H1 (cell line): ENCODE measurements at regions of chr10 and their contacts with region 1.

Region 1: DNA sequence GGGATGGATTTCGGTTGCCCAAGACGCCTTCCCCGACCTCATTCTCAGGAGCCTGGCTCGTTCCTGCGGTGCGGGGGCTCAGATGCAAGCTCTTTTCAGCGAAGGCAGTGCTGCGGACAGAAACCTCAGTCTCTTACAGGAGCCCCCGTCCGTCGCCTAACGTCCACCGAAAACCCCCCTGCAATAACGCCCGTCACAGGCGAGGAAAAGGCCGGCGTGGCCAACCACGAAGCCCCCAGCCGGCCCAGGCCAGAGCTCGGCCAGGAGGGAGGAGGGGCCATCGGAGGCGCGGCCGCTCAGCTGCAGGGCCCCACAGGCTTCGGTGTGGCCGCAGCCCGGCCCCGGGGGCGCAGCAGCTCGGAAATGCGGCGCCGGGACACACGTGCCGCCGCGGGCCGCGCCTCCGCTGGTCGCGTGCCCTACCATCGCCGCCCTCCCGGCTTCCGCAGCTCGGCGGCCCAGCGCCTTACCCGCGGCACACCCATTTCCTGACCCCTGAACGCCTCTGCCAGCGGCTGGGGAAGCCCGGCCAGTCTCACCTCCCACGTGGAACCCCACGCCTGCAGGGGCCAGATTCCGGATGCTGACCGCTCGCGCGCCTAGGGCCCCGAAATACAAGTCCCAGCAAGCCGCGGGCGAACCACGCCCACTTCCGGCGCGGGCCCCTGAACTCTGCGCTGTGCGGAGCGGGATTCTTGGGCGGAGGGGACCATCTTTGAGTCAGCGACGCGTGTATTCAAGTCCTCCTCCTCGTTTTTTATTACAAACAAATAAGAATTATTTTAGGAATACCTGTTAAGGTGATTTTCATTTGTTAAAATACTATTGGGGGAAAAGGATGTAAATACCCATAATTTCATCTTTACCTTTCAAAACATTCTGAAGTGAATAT is at the start of gene ZNF239:
- DNase-seq: peak; percentile 34 to 87
- H3K4me3 ChIP-seq: peak within 1 kb of the TSS; percentile 32 to 64 (median 47)
- H3K27ac ChIP-seq: no peak within 1 kb of the TSS
- H3K4me1 ChIP-seq: peaks cover 0 to 5% (median 1%) of the 10 kb centered on the region in 4 experiments; a peak in 2 of 7 replicates
- H3K27me3 ChIP-seq: peaks cover 0 to 19% (median 9%) of the 10 kb centered on the region in 4 experiments; a peak in 6 of 7 replicates
- CTCF ChIP-seq: no peak
- EP300 ChIP-seq: no peak
- POLR2A ChIP-seq: no peak
- RAD21 ChIP-seq: no peak
- total RNA-seq, gene ZNF239: 10.3 and 11.4 TPM in 2 replicates

Region 2: DNA sequence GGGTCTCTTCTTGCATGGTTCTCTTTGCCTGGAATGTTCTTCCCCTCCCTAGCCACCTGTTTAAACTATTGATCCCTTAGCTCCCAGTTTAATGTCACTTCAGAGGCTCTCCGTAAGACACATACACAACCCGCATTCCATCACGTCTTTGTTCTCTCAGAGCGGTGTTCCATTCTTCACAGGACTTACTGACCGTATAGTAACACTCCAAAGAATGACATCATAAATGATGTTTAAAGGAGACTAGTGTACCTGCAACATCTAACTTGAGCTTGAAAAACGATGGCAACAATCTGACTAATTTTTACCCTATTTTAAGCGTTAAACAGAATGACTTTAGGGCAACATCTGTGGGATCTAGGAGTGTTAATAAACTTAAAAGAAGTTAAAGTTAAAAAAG is 10.2 kb before region 1 on chr10:
- CTCF ChIA-PET with region 1: interaction called, 5 read pairs
- POLR2A ChIA-PET with region 1: interaction called, 23 read pairs
- DNase-seq: no peak
- H3K4me3 ChIP-seq: no peak overlapping the region
- H3K27ac ChIP-seq: no peak overlapping the region
- H3K4me1 ChIP-seq: no peaks in the 10 kb centered on the region
- H3K27me3 ChIP-seq: no peaks in the 10 kb centered on the region
- CTCF ChIP-seq: no peak
- EP300 ChIP-seq: no peak
- POLR2A ChIP-seq: no peak
- RAD21 ChIP-seq: no peak